PC-3 (cell line): ENCODE measurements at regions of chr11 and their contacts with region 1.

Region 1: DNA sequence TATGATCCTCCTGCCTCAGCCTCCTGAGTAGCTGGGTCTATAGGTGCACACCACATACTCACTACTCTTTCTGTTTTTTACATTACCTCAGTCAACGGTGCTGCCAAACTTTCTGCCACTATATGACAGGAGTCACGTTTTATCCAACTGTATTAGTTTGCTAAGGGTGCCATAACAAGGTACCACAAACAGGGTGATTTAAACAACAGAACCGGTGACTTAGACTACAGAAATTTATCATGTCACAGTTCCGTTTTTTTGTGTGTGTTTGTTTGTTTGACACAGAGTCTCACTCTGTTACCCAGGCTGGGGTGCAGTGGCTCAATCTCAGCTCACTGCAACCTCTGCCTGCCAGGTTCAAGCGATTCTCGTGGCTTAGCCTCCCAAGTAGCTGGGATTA is 6.3 kb upstream of the SWAP70 start:
- DNase-seq: no peak
- ATAC-seq: no peak
- H3K4me3 ChIP-seq: no peak overlapping the region
- H3K27ac ChIP-seq: no peak overlapping the region
- H3K4me1 ChIP-seq: peaks cover 9% of the 10 kb centered on the region
- H3K27me3 ChIP-seq: no peaks in the 10 kb centered on the region
- CTCF ChIP-seq: no peak

Region 2: GRCh38 chr11:10208131-10208575 is 550.6 kb after region 1 on chr11:
- CTCF ChIA-PET with region 1: no interaction called
- POLR2A ChIA-PET with region 1: interaction called, 17 read pairs
- intact Hi-C with region 1: no loop called
- DNase-seq: peak; percentile 74
- ATAC-seq: peak; percentile 74
- H3K4me3 ChIP-seq: no peak overlapping the region
- H3K27ac ChIP-seq: no peak overlapping the region
- H3K4me1 ChIP-seq: no peaks in the 10 kb centered on the region
- H3K27me3 ChIP-seq: no peaks in the 10 kb centered on the region
- CTCF ChIP-seq: peak; percentile 72